Activated naive CD4-positive, alpha-beta T cell treated with anti-CD3 and anti-CD28 coated beads for 36 hours (primary cell): ENCODE measurements at regions of chr10 and their contacts with region 1.

Region 1: GRCh38 chr10:17144757-17145156 is 15.1 kb upstream of the CUBN start:
- DNase-seq: peak; percentile 84
- H3K4me3 Mint-ChIP-seq: no peak overlapping the region
- H3K27ac Mint-ChIP-seq: peak overlapping the region; percentile 47
- H3K4me1 Mint-ChIP-seq: peaks cover 28% of the 10 kb centered on the region
- H3K27me3 Mint-ChIP-seq: no peaks in the 10 kb centered on the region

Region 2: DNA sequence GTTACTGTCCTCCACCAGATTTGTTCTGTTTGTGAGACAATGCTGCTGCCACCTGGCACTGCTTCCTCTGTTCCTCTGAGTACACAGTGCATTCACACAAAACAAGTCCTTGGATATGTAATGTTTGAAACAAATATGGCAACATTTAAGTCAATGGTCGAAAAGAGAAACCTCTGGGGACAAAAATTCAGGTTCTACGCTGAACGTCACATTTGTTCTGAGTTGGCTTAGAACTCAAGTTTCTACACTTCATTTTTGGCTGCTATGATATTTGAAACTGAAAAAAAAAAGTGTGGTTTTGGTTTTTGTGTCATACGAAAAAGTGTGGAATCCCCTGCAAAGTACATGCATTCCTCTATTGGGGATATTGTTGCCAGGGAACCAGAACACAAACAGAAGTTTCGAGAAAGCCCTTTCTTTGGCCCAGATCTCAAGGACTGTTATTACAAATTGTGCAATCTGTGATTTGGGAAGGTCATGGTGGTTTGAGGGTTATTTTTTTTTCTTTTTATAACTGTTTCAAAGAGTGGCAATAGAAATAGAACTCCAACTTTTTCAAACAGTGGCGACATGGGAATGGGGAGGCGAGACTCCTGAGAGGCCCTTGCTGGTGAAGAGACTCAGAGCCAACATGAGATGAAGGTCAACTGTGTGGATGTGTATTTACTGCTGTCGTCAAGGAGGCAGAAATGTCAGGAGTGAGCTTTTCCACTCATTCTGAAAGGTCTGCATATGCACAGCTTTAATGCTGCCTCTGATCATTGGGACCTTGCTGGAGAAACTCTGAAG is 142.6 kb before region 1 on chr10:
- CTCF ChIA-PET with region 1: no interaction called
- intact Hi-C with region 1: loop called (anchors 1 kb)
- DNase-seq: peak; percentile 44
- H3K4me3 Mint-ChIP-seq: no peak overlapping the region
- H3K27ac Mint-ChIP-seq: peak overlapping the region; percentile 5
- H3K4me1 Mint-ChIP-seq: peaks cover 57% of the 10 kb centered on the region
- H3K27me3 Mint-ChIP-seq: peaks cover 5% of the 10 kb centered on the region

Region 3: GRCh38 chr10:17067376-17068264 is 77.1 kb before region 1 on chr10:
- CTCF ChIA-PET with region 1: no interaction called
- intact Hi-C with region 1: loop called (anchors 5 kb)
- DNase-seq: no peak
- H3K4me3 Mint-ChIP-seq: no peak overlapping the region
- H3K27ac Mint-ChIP-seq: no peak overlapping the region
- H3K4me1 Mint-ChIP-seq: peaks cover 31% of the 10 kb centered on the region
- H3K27me3 Mint-ChIP-seq: no peaks in the 10 kb centered on the region

Region 4: DNA sequence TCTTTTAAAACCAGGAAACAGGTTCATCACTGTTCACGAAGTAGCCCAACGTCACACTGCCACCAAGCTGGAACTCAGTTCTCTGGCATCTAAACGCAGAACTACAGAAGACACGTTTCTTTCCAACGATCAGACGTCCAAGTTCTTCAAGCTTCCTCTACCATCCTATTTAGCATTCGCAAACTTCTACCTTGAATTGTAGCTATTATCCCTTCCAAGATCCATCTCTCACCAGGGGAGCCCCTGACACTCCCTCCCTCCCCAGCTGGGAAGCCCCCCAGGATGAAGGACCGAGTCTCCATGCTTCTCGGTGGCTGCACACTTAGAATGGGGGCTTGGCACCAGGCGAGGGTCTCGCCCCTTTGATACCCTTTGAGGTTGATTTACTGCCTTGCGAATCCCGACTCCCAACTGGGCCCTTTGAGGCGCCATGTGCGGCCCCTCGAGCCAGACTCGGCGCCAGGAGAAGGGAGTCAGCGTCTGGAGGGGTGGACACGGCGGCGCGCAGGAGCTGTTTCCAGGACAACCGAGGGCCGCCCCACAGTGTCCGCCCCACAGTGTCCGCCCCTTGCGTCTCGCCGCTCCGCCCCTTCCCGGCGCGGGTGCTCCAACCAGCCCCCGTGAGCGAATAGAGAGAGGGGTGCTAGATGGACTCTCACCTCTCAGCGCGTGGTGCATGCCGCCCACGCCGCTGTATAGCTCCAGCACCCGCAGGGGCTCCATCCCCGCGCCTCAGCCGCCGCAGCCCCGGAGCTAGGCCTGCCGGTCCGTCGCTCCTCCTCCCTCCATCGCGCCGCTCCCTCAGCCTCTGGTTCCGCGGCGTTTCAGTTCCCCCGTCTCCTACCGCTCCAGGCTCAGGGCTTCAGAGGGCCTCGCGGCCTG is 56.4 kb after region 1 on chr10 and contains the start of gene TRDMT1:
- CTCF ChIA-PET with region 1: no interaction called
- intact Hi-C with region 1: loop called (anchors 1 kb)
- DNase-seq: peak; percentile 77
- H3K4me3 Mint-ChIP-seq: peak within 1 kb of the TSS; percentile 86
- H3K27ac Mint-ChIP-seq: peak within 1 kb of the TSS; percentile 92
- H3K4me1 Mint-ChIP-seq: peaks cover 35% of the 10 kb centered on the region
- H3K27me3 Mint-ChIP-seq: no peaks in the 10 kb centered on the region
- total RNA-seq, gene TRDMT1: 6.5 to 7.2 TPM